ENCODE measurements at regions of chr3 and their contacts with region 1.

Region 1: DNA sequence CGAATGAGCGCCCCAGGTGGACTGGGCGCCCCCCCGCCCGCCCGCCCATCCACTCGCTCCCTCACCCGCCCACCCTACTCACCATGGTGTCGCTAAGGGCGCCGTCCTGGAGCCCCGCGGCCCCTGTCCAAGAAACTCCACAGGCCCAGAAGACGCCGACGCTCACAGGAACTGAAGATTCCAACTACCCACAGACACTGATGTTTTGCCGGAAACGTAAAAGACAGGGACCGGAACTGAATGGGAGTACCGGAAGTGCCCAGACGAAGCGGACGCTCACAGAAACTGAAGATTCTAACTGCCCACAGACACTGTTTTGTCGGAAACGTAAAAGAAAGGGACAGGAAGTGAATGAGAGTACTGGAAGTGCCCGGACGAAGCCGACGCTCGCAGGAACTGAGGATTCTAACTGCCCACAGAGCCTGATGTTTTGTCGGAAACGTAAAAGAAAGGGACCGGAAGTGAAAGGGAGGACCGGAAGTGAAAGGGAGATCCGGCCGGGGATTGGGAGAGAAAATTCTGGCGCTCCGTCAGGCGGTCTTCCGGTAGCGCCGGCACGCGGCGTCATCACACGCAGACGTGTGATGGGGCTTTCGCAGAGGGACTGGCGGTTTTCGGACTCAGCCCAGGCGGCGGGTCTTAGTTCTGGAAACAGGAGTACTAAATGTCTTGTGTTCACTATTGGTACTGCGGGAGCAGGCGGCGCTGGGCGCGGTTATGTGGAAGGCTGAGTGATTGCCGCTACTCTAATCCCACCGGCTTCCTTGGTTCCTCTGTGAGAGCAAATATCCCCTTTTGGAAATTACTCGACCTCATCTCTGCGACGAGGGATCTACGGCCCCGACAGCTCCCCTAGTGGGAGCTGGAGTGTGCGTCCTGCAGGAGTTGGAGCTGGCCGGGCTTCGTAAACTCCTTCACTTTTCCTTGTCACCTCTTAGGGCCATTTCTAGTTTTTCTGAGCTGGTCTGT is at the start of gene ISY1:
- DNase-seq: peak; percentile 92
- ATAC-seq: peak; percentile 82
- H3K4me3 ChIP-seq: peak within 1 kb of the TSS; percentile 91 to 99 (median 96)
- H3K27ac ChIP-seq: peak within 1 kb of the TSS; percentile 100
- H3K4me1 ChIP-seq: peaks cover 22% of the 10 kb centered on the region
- H3K27me3 ChIP-seq: no peaks in the 10 kb centered on the region; a peak in 1 of 5 replicates
- CTCF ChIP-seq: peak; percentile 65
- EP300 ChIP-seq: 0 out of 4 replicates have a peak, but pooled peaks of 1 of the 2 experiments have one; percentile 5
- POLR2A ChIP-seq: peak; percentile 82 to 94
- RAD21 ChIP-seq: peak; percentile 27; the same call in 1 of the 2 replicates
- total RNA-seq, gene ISY1: 39.1 and 59.0 TPM in 2 replicates

Region 2: GRCh38 chr3:129052675-129053074 is 108.5 kb before region 1 on chr3:
- CTCF ChIA-PET with region 1: no interaction called
- POLR2A ChIA-PET with region 1: interaction called, 10 read pairs
- in situ Hi-C with region 1: no loop called
- intact Hi-C with region 1: loop called (anchors 1 kb)
- DNase-seq: no peak
- ATAC-seq: no peak
- H3K4me3 ChIP-seq: no peak overlapping the region
- H3K27ac ChIP-seq: no peak overlapping the region
- H3K4me1 ChIP-seq: peaks cover 52% of the 10 kb centered on the region
- H3K27me3 ChIP-seq: 0 out of 5 replicates have a peak, but pooled peaks cover 0 to 9% of the 10 kb centered on the region in 2 experiments
- CTCF ChIP-seq: no peak
- EP300 ChIP-seq: no peak
- POLR2A ChIP-seq: no peak
- RAD21 ChIP-seq: no peak

Region 3: DNA sequence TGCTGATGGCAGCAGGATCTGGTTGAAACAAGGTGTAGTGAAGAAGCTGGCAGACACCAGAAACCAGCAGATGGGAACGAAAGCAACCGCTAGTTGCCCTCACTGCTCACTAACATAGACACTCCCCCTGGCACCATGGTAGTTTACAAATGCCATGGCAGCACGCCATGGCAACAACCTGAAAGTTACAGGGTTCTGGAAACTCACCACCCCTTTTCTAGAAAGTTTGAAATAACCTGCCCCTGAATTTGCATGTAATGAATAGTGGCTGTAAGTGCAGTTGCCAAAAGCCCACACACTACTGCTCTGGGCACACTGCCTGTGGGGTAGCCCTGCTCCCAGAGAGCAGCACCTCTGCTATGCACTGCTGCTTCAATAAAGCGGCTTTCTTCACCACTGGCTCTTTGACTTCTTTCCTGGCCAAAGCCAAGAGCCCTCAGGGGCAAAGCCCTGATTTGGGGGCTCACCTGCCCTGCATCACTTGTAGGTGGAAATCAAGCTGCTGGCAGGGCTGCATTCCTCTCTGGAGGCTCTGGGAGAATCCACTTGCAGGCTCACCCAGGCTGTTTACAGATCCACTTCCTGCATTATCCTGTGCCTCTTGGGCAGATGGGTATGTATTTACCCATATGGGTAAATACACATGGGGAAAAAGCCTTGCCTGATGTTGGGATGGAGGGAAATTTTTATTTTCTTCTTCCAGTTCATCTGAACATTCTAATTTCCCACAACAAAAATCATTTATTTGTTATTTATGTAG is 102.6 kb before region 1 on chr3:
- CTCF ChIA-PET with region 1: no interaction called
- POLR2A ChIA-PET with region 1: interaction called, 10 read pairs
- in situ Hi-C with region 1: no loop called
- intact Hi-C with region 1: loop called (anchors 1 kb)
- DNase-seq: no peak
- ATAC-seq: no peak
- H3K4me3 ChIP-seq: no peak overlapping the region
- H3K27ac ChIP-seq: no peak overlapping the region
- H3K4me1 ChIP-seq: peaks cover 31% of the 10 kb centered on the region
- H3K27me3 ChIP-seq: peaks cover 0 to 28% of the 10 kb centered on the region in 2 experiments; a peak in 3 of 5 replicates
- CTCF ChIP-seq: no peak
- EP300 ChIP-seq: no peak
- POLR2A ChIP-seq: no peak
- RAD21 ChIP-seq: no peak

Measured in HepG2 (cell line).